Spleen (tissue), 13 donors: ENCODE measurements at regions of chr7 and their contacts with region 1.

Region 1: DNA sequence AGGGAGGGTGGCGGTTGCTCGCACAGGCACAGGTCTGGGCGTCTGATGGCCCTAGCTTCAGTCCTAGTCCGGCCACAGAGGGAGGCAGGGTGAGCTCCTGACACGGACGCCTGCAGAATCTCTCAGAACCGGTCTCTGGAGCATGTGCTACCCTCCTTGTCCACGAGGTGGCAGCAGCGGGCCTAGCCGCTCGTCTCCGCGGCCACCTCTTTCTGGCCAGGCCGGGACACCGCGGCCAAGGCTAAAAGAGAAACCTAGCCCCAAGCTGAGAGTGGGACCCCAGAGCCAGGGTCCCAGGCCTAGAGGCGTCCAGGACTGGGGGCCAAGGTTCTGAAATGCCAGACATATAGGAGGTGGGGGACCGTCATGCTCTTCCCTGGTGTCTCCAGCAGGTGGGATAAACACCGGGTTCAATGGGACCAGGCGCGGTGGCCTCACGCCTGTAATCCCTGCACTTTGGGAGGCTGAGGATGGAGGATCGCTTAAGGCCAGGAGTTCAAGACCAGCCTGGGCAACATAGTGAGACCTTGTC is 3.2 kb upstream of the LAT2 start:
- DNase-seq: peak; percentile 96
- H3K4me3 ChIP-seq: peak overlapping the region in 6 of 8 donors; percentile 15 to 58 (median 23)
- H3K27ac ChIP-seq: peak overlapping the region in 2 of 8 donors; percentile 37 to 59
- H3K4me1 ChIP-seq: peaks cover 6 to 82% (median 48%) of the 10 kb centered on the region in 6 donors
- H3K27me3 ChIP-seq: no peaks in the 10 kb centered on the region
- CTCF ChIP-seq: peak; percentile 91 to 98 (median 96)
- POLR2A ChIP-seq: no peak

Region 2: GRCh38 chr7:73894733-73895551 is 311.7 kb before region 1 on chr7:
- intact Hi-C with region 1: no loop called
- DNase-seq: no peak
- H3K4me3 ChIP-seq: no peak overlapping the region
- H3K27ac ChIP-seq: peak overlapping the region in 5 of 8 donors; percentile 24 to 51 (median 33)
- H3K4me1 ChIP-seq: peaks cover 0 to 34% (median 4%) of the 10 kb centered on the region in 6 donors
- H3K27me3 ChIP-seq: peaks cover 0 to 12% (median 0%) of the 10 kb centered on the region in 7 donors
- CTCF ChIP-seq: no peak
- POLR2A ChIP-seq: no peak

Region 3: GRCh38 chr7:74068393-74069085 is 138.1 kb before region 1 on chr7:
- intact Hi-C with region 1: loop called (anchors 5 kb)
- DNase-seq: peak; percentile 66
- H3K4me3 ChIP-seq: no peak overlapping the region
- H3K27ac ChIP-seq: no peak overlapping the region
- H3K4me1 ChIP-seq: peaks cover 0 to 11% (median 6%) of the 10 kb centered on the region in 6 donors
- H3K27me3 ChIP-seq: no peaks in the 10 kb centered on the region
- CTCF ChIP-seq: no peak
- POLR2A ChIP-seq: no peak

Region 4: DNA sequence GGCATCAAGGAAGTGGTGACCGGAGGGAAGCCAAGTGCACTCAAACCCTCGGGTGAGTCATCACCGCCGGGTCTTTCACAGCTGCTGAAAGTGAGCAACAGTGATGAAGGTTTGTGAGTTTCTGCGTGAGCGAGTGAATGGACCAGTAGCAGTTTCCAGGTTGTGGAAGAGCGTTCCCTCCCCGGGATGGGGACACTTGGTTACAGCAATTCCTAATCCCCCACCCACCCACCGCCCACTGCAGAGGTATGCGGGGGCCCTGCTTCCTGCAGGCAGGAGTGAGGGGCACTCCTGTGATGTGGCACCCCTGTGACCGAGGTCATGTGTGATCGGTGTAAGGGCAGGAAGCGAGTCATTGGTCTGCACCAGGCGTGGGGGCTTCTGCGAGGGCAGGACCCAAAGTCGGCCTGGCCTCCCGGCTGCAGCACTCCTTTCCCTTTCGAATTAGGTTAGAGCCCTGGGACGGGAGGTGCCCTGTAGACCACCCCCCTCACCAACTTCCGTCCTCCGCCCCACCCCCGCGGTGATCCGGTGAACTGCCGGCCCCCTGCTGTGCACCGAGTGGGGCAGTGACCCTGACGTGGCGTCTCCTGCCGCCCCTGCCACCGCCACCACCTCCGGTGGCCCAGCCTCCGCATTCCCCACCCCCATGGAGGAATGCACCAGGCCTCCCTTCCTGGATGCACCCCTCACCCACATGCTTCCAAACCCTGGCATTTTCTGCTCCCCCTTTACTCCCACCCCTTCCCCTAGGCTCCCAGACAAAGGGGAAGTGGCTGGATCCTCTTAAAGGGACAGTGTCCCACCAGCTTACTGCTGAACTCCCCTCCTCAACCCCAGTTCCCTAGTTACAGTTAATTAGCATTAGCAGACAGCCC is 112.2 kb before region 1 on chr7:
- intact Hi-C with region 1: no loop called
- DNase-seq: peak; percentile 93
- H3K4me3 ChIP-seq: peak overlapping the region; percentile 31 to 80 (median 61)
- H3K27ac ChIP-seq: peak overlapping the region; percentile 71 to 95 (median 87)
- H3K4me1 ChIP-seq: peaks cover 21 to 44% (median 35%) of the 10 kb centered on the region in 6 donors
- H3K27me3 ChIP-seq: no peaks in the 10 kb centered on the region
- CTCF ChIP-seq: peak in 7 of 11 experiments; percentile 15 to 36 (median 32)
- POLR2A ChIP-seq: no peak

Region 5: DNA sequence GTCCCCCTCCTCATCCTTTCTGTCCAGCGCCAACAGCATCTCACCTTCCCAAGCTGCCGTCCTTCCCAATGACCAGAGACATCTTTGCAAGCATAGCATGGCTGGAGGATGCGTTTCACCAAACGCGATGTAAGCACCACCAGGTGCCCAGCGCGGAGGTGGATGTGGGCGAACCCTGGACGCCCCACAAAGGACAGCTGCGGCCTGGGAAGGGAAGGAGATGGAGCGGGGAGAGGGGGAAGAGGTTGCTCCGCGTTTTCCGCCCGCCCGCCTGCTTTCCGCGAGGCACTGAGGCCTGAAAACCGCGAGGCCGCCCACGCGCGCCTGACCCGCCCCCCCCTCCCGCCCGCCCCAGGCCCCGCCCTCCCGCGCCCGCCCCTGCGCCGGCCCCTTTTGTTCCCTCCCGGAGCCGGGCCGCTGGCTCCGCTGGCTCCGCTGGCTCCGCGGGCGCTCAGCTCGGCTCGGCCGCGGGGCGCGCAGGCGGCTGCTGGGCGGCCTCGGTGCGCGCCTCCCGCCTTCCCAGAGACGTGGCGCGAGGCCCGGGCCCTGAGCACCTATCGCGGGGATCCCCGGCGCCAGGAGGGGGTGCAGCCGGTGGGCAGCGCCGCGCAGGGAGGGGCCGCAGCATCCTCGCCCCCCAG is 82.5 kb after region 1 on chr7 and contains the start of gene CLIP2:
- intact Hi-C with region 1: loop called (anchors 10 kb)
- DNase-seq: peak; percentile 92
- H3K4me3 ChIP-seq: peak within 1 kb of the TSS; percentile 59 to 95 (median 74)
- H3K27ac ChIP-seq: peak within 1 kb of the TSS in 7 of 8 donors; percentile 72 to 87 (median 80)
- H3K4me1 ChIP-seq: peaks cover 18 to 74% (median 52%) of the 10 kb centered on the region in 6 donors
- H3K27me3 ChIP-seq: peaks cover 0 to 14% (median 0%) of the 10 kb centered on the region in 7 donors
- CTCF ChIP-seq: no peak
- POLR2A ChIP-seq: no peak
- total RNA-seq, gene CLIP2: 15.7 to 18.6 (median 17.4) TPM

Region 6: GRCh38 chr7:74312418-74313021 is 105.9 kb after region 1 on chr7:
- intact Hi-C with region 1: no loop called
- DNase-seq: no peak
- H3K4me3 ChIP-seq: no peak overlapping the region
- H3K27ac ChIP-seq: no peak overlapping the region
- H3K4me1 ChIP-seq: peaks cover 0 to 16% (median 2%) of the 10 kb centered on the region in 6 donors
- H3K27me3 ChIP-seq: no peaks in the 10 kb centered on the region
- CTCF ChIP-seq: no peak
- POLR2A ChIP-seq: no peak